ENCODE measurements at regions of chr4 and their contacts with region 1.

Region 1: DNA sequence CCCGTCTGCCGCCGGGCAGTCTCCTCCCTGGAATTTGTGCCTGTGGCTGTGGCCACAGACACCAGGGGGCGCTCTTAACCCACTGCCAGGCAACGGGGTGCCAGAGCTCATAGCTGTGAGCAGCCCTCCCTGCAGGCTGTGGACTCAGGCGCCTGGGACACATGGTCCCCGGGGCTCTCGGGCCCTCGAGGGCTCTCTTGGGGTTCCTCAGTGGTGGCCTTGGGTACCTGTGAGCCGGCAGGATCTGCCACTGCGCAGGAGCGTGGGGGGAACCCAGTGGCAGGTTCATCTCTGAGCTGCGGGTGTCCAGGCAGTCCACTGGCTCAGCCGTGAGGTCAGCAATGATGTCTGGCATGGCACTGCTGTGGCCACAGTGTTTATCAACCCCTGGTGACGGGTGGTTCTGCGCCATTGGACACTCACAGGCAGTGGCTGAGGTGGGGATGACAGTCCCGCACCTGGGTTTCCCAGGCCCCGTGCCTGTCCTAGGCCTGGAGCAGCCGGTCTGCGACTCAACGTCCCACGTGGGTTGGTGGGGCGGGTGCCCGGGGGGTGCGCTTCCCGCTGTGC is 37.2 kb downstream of the PCGF3 start:
- DNase-seq: peak; percentile 78
- H3K4me3 Mint-ChIP-seq: no peak overlapping the region
- H3K27ac Mint-ChIP-seq: no peak overlapping the region
- H3K4me1 Mint-ChIP-seq: peaks cover 4% of the 10 kb centered on the region
- H3K27me3 Mint-ChIP-seq: no peaks in the 10 kb centered on the region

Region 2: GRCh38 chr4:314296-314903 is 428.4 kb before region 1 on chr4:
- CTCF ChIA-PET with region 1: no interaction called
- POLR2A ChIA-PET with region 1: no interaction called
- DNase-seq: no peak
- H3K4me3 Mint-ChIP-seq: no peak overlapping the region
- H3K27ac Mint-ChIP-seq: no peak overlapping the region
- H3K4me1 Mint-ChIP-seq: no peaks in the 10 kb centered on the region
- H3K27me3 Mint-ChIP-seq: no peaks in the 10 kb centered on the region

Region 3: GRCh38 chr4:663438-664428 is 79.1 kb before region 1 on chr4:
- CTCF ChIA-PET with region 1: no interaction called
- POLR2A ChIA-PET with region 1: no interaction called
- DNase-seq: peak; percentile 81
- H3K4me3 Mint-ChIP-seq: peak overlapping the region; percentile 80
- H3K27ac Mint-ChIP-seq: peak overlapping the region; percentile 92
- H3K4me1 Mint-ChIP-seq: peaks cover 19% of the 10 kb centered on the region
- H3K27me3 Mint-ChIP-seq: no peaks in the 10 kb centered on the region

Region 4: DNA sequence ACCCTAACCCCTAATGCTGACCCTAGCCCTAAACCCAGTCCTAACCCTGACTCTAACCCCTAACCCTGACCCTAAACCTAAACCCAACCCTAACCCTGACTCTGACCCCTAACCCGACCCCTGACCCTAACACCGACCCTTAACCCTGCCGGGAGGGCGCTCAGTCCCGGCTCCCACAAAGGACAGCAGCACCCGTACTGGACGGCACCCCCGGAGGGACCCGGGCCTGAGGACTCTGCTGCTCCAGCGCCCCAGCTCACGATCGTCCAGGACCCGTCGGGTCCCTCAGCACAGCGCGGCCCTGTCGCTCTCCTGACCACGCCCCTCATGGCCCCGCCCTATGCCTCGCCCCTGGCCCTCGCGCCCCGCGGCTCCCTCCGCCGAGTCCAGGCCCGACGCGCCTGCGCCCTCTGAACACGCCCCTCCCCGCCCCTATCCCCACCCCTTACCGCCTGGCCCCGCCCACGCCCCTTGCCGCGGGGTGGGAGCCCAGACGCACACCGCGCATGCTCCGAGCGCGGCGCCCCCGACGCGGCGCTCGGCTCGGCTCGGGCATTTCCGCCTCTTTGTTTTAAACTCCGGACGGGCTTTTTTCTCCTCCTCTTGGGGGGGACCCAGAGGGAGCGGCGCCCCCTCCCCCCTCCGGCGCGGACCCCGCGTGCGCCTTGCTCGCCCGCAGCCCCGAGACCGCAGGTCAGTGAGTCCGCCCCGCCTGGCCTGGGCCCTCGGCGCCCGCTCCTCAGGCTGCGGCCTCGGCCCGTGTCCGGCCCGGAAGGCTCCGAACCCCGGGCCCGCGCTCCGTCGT is 37.3 kb before region 1 on chr4 and contains the start of gene PCGF3:
- CTCF ChIA-PET with region 1: no interaction called
- POLR2A ChIA-PET with region 1: no interaction called
- DNase-seq: peak; percentile 96
- H3K4me3 Mint-ChIP-seq: peak within 1 kb of the TSS; percentile 75
- H3K27ac Mint-ChIP-seq: peak within 1 kb of the TSS; percentile 82
- H3K4me1 Mint-ChIP-seq: peaks cover 18% of the 10 kb centered on the region
- H3K27me3 Mint-ChIP-seq: no peaks in the 10 kb centered on the region
- total RNA-seq, gene PCGF3: 34.9 to 36.8 TPM

Region 5: GRCh38 chr4:986879-987623 is 244.2 kb after region 1 on chr4 and contains the start of gene IDUA:
- CTCF ChIA-PET with region 1: interaction called, 10 read pairs
- POLR2A ChIA-PET with region 1: no interaction called
- DNase-seq: peak; percentile 88
- H3K4me3 Mint-ChIP-seq: peak within 1 kb of the TSS; percentile 81
- H3K27ac Mint-ChIP-seq: peak within 1 kb of the TSS; percentile 76
- H3K4me1 Mint-ChIP-seq: peaks cover 26% of the 10 kb centered on the region
- H3K27me3 Mint-ChIP-seq: no peaks in the 10 kb centered on the region
- total RNA-seq, gene IDUA: 35.0 to 43.3 TPM

Measured in activated CD4-positive, alpha-beta T cell treated with anti-CD3 and anti-CD28 coated beads, Interleukin-2, amount 10 ng/mL, durations not matched to agents 7 days and 5 days (primary cell).